ENCODE measurements at regions of chr5 and their contacts with region 1.

Region 1: DNA sequence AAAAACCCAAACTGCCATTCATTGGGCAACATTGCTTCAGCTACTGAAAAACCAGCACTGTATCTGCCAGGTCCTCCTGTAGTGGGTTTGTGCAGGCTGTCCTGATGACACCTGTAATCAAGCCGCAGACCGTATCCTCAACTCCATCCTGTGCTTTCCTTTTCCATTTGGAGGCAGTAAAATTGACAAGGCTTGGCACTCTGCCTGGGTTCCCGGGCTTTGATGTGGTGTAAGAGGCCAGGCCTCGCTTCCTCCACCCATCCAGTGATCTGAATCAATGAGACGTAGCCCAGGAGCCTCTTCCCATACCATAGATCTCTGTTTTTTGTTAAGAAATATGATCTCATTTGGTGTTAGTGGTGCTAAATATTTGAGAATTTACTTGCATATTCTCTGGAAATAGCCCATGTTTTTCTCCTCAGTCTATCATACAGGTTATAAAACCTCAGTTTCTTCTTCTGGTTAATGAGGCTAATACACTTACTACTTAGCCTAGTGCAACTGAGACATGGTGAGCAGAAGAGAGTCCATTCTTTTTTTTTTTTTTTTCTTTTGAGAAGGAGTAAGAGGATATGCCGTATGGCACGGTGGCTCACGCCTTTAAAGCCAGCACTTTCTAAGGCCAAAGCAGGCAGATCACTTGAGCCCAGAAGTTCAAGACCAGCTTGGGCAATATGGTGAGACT is 34.8 kb downstream of the LSM11 start:
- DNase-seq: no peak
- ATAC-seq: no peak
- H3K4me3 Mint-ChIP-seq: no peak overlapping the region
- H3K27ac Mint-ChIP-seq: no peak overlapping the region
- H3K4me1 Mint-ChIP-seq: no peaks in the 10 kb centered on the region
- H3K27me3 Mint-ChIP-seq: peaks cover 1% of the 10 kb centered on the region

Region 2: GRCh38 chr5:155897761-155898160 is 1880.5 kb before region 1 on chr5:
- CTCF ChIA-PET with region 1: no interaction called
- POLR2A ChIA-PET with region 1: no interaction called
- intact Hi-C with region 1: loop called in 1 of 2 experiments (anchors 10 kb)
- DNase-seq: no peak
- ATAC-seq: no peak
- H3K4me3 Mint-ChIP-seq: no peak overlapping the region
- H3K27ac Mint-ChIP-seq: no peak overlapping the region
- H3K4me1 Mint-ChIP-seq: no peaks in the 10 kb centered on the region
- H3K27me3 Mint-ChIP-seq: peaks cover 1% of the 10 kb centered on the region

Region 3: GRCh38 chr5:157159209-157159751 is 619.0 kb before region 1 on chr5:
- CTCF ChIA-PET with region 1: no interaction called
- POLR2A ChIA-PET with region 1: no interaction called
- intact Hi-C with region 1: no loop called
- DNase-seq: peak; percentile 66
- ATAC-seq: peak; percentile 81
- H3K4me3 Mint-ChIP-seq: peak overlapping the region; percentile 64
- H3K27ac Mint-ChIP-seq: peak overlapping the region; percentile 99
- H3K4me1 Mint-ChIP-seq: peaks cover 71% of the 10 kb centered on the region
- H3K27me3 Mint-ChIP-seq: no peaks in the 10 kb centered on the region

Region 4: DNA sequence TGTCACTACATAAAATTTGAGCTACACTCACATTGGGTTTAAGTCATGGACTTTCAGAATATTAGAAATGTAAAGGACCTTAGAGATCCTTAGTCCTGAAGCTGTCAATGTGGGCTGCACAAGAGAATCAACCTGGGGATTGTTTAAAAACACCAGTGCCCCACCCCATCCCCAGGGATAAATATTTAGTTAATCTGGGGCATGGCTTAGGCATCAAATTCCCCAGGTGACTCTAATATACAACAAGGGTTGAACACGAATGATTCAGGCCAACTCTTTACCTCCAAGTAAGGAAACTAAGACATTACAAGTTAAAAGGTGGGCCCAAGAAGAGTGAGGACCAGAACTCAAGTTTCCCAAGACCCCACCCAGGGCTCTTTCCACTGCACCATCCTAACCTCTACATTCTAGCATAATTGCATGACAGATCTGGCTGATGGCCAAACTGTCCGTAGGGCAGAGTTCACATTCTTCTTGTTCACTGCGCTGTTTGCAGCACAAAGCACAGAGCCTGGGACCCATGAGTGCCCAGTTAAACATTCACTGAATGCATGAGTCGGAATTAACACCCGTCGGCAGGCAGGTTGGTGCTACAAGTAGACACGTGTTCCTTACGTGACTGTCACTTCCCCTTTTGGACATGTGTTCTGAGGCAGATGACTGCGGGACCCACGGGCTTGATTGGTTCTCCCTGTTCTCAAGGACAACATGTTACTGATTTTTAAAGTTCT is 487.1 kb before region 1 on chr5:
- CTCF ChIA-PET with region 1: no interaction called
- POLR2A ChIA-PET with region 1: no interaction called
- intact Hi-C with region 1: no loop called
- DNase-seq: peak; percentile 74
- ATAC-seq: peak; percentile 76
- H3K4me3 Mint-ChIP-seq: no peak overlapping the region
- H3K27ac Mint-ChIP-seq: peak overlapping the region; percentile 70
- H3K4me1 Mint-ChIP-seq: peaks cover 66% of the 10 kb centered on the region
- H3K27me3 Mint-ChIP-seq: no peaks in the 10 kb centered on the region

Measured in activated CD4-positive, alpha-beta T cell treated with anti-CD3 and anti-CD28 coated beads for 36 hours (primary cell).